ENCODE measurements at regions of chr6 and their contacts with region 1.

Region 1: DNA sequence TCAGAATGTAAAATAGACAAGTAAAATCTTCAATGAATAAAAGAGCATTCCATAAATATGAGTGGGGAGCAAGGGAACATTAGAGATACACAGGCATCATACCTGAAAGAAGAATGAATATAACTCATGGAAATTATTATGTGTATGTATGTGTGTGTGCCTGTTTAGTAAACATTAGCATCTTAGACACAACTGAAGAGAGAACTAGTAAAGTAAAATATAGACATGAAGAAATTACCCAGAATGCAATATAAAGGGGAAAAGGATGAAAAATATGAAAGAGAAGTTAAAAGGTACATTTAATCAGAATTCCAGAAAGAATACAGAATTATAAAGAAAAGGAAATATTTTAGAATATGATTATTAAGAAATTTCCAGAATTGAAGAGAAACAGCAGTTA is 264.3 kb downstream of the KCNQ5 start:
- DNase-seq: no peak
- ATAC-seq: no peak

Region 2: GRCh38 chr6:72809746-72810390 is 76.3 kb before region 1 on chr6:
- intact Hi-C with region 1: loop called (anchors 2 kb)
- DNase-seq: no peak
- ATAC-seq: no peak

Region 3: DNA sequence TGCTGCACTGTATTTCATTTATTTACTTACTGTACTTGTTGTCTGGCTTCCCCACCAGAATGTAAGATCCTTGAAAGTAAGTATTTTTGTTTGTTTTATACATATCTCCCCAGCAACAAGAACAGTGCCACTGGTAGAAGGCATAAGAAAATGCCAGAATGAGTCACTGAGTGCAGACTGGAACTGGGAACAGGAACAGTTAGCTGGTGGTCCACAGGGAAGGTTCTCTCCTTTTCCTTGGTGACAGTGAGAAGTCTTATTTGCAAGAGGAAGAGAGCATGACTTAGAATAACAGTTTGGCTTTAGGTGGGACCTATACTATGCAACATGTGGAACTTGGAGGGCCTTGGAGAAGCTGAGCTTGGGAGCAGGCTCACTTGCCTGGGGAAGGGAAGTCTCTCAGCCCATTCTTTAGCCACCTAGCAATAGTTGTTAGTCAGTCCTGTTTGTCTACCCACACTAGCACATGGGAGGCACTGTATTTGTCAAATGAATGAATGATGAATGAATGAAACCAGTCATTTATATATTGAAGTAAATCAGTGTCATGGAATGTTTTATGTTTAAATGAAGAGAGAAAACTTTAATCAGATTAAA is 60.8 kb before region 1 on chr6:
- intact Hi-C with region 1: no loop called
- DNase-seq: no peak
- ATAC-seq: no peak